PC-9 (cell line): ENCODE measurements at regions of chr3 and their contacts with region 1.

Region 1: GRCh38 chr3:57755668-57756527 is at the start of gene SLMAP:
- DNase-seq: peak; percentile 87 to 95
- H3K4me3 ChIP-seq: peak within 1 kb of the TSS; percentile 74
- H3K27ac ChIP-seq: peak within 1 kb of the TSS; percentile 95
- H3K4me1 ChIP-seq: peaks cover 56% of the 10 kb centered on the region
- H3K27me3 ChIP-seq: no peaks in the 10 kb centered on the region
- CTCF ChIP-seq: no peak
- total RNA-seq, gene SLMAP: 116 and 119 TPM in 2 replicates

Region 2: GRCh38 chr3:57451150-57451846 is 304.6 kb before region 1 on chr3:
- CTCF ChIA-PET with region 1: no interaction called
- POLR2A ChIA-PET with region 1: no interaction called
- intact Hi-C with region 1: no loop called
- DNase-seq: no peak
- H3K4me3 ChIP-seq: no peak overlapping the region
- H3K27ac ChIP-seq: peak overlapping the region; percentile 75
- H3K4me1 ChIP-seq: peaks cover 30% of the 10 kb centered on the region
- H3K27me3 ChIP-seq: no peaks in the 10 kb centered on the region
- CTCF ChIP-seq: no peak

Region 3: DNA sequence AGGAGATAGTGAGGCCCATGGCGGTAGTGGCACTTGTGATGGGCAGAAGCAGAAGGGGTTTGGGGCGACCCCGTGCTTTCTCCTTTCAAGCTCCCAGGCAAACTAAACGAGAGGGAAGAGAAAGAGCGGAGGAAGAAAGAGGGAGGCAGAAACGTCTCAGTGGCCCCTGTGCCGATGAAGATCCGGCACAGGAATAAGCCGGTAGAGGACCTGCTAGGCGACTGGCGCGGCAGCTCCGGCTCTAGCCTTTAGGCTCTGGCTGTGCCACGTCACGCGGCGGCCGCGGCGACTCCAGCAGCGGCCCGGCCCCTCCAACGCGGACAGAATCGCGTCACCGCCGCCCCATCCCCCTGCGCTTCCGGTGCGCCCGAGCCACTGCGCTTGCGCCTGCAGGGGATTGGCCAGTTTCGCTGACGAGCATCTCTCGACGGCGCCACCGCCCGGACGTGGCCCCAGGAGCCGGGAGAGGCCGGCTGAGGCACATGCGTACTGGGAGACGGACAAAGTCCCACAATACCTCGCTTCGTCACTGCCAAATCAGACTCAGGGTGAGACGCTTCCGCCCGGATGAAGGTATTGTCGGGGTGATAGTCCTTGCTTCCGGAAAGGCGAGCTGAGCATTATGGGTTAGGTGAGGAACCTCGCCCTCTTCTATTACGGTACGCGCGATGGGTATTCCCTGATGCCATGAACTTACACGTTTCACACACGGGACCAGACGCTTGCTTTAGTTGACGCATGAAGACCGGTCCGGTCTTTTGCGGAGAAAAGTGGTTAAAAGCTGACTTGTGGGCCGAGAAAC is 158.6 kb before region 1 on chr3 and contains the start of gene ARF4:
- CTCF ChIA-PET with region 1: no interaction called
- POLR2A ChIA-PET with region 1: interaction called, 9 read pairs
- intact Hi-C with region 1: loop called (anchors 1 kb)
- DNase-seq: peak; percentile 97 to 99
- H3K4me3 ChIP-seq: peak within 1 kb of the TSS; percentile 80
- H3K27ac ChIP-seq: peak within 1 kb of the TSS; percentile 97
- H3K4me1 ChIP-seq: peaks cover 36% of the 10 kb centered on the region
- H3K27me3 ChIP-seq: no peaks in the 10 kb centered on the region
- CTCF ChIP-seq: no peak; the same call in 1 of the 2 replicates
- total RNA-seq, gene ARF4: 132 and 182 TPM in 2 replicates

Region 4: GRCh38 chr3:57692259-57693147 is 63.4 kb before region 1 on chr3 and contains the start of gene DENND6A:
- CTCF ChIA-PET with region 1: interaction called, 4 read pairs
- POLR2A ChIA-PET with region 1: interaction called, 5 read pairs
- intact Hi-C with region 1: loop called (anchors 1 kb)
- DNase-seq: peak; percentile 71 to 96
- H3K4me3 ChIP-seq: peak within 1 kb of the TSS; percentile 65
- H3K27ac ChIP-seq: peak within 1 kb of the TSS; percentile 91
- H3K4me1 ChIP-seq: peaks cover 32% of the 10 kb centered on the region
- H3K27me3 ChIP-seq: no peaks in the 10 kb centered on the region
- CTCF ChIP-seq: no peak
- total RNA-seq, gene DENND6A: 23.6 and 28.2 TPM in 2 replicates

Region 5: GRCh38 chr3:57826245-57826951 is 70.5 kb after region 1 on chr3:
- CTCF ChIA-PET with region 1: interaction called, 3 read pairs
- POLR2A ChIA-PET with region 1: interaction called, 9 read pairs
- intact Hi-C with region 1: loop called (anchors 5 kb)
- DNase-seq: no peak
- H3K4me3 ChIP-seq: no peak overlapping the region
- H3K27ac ChIP-seq: peak overlapping the region; percentile 47
- H3K4me1 ChIP-seq: peaks cover 29% of the 10 kb centered on the region
- H3K27me3 ChIP-seq: no peaks in the 10 kb centered on the region
- CTCF ChIP-seq: no peak; the same call in 1 of the 2 replicates

Region 6: GRCh38 chr3:58355179-58355578 is 599.3 kb after region 1 on chr3:
- CTCF ChIA-PET with region 1: no interaction called
- POLR2A ChIA-PET with region 1: no interaction called
- intact Hi-C with region 1: no loop called
- DNase-seq: no peak
- H3K4me3 ChIP-seq: no peak overlapping the region
- H3K27ac ChIP-seq: no peak overlapping the region
- H3K4me1 ChIP-seq: peaks cover 11% of the 10 kb centered on the region
- H3K27me3 ChIP-seq: no peaks in the 10 kb centered on the region
- CTCF ChIP-seq: no peak